ENCODE measurements at regions of chr3 and their contacts with region 1.

Region 1: GRCh38 chr3:116140100-116140689 is 305.1 kb downstream of the LSAMP start:
- DNase-seq: no peak
- H3K4me3 Mint-ChIP-seq: no peak overlapping the region
- H3K27ac Mint-ChIP-seq: no peak overlapping the region
- H3K4me1 Mint-ChIP-seq: no peaks in the 10 kb centered on the region
- H3K27me3 Mint-ChIP-seq: no peaks in the 10 kb centered on the region
- CTCF ChIP-seq: peak; percentile 83

Region 2: GRCh38 chr3:114551770-114552526 is 1588.2 kb before region 1 on chr3:
- CTCF ChIA-PET with region 1: no interaction called
- intact Hi-C with region 1: no loop called
- DNase-seq: peak; percentile 58
- H3K4me3 Mint-ChIP-seq: no peak overlapping the region
- H3K27ac Mint-ChIP-seq: peak overlapping the region; percentile 80
- H3K4me1 Mint-ChIP-seq: peaks cover 26% of the 10 kb centered on the region
- H3K27me3 Mint-ChIP-seq: no peaks in the 10 kb centered on the region
- CTCF ChIP-seq: no peak

Region 3: GRCh38 chr3:115671761-115672455 is 468.3 kb before region 1 on chr3:
- CTCF ChIA-PET with region 1: no interaction called
- intact Hi-C with region 1: no loop called
- DNase-seq: no peak
- H3K4me3 Mint-ChIP-seq: no peak overlapping the region
- H3K27ac Mint-ChIP-seq: no peak overlapping the region
- H3K4me1 Mint-ChIP-seq: no peaks in the 10 kb centered on the region
- H3K27me3 Mint-ChIP-seq: peaks cover 12% of the 10 kb centered on the region
- CTCF ChIP-seq: no peak

Region 4: GRCh38 chr3:116339441-116340028 is 199.3 kb after region 1 on chr3:
- CTCF ChIA-PET with region 1: no interaction called
- intact Hi-C with region 1: loop called (anchors 5 kb)
- DNase-seq: no peak
- H3K4me3 Mint-ChIP-seq: no peak overlapping the region
- H3K27ac Mint-ChIP-seq: no peak overlapping the region
- H3K4me1 Mint-ChIP-seq: peaks cover 18% of the 10 kb centered on the region
- H3K27me3 Mint-ChIP-seq: no peaks in the 10 kb centered on the region
- CTCF ChIP-seq: no peak

Region 5: GRCh38 chr3:116453666-116454346 is 313.6 kb after region 1 on chr3:
- CTCF ChIA-PET with region 1: interaction called, 3 read pairs
- intact Hi-C with region 1: loop called (anchors 1 kb)
- DNase-seq: no peak
- H3K4me3 Mint-ChIP-seq: no peak overlapping the region
- H3K27ac Mint-ChIP-seq: no peak overlapping the region
- H3K4me1 Mint-ChIP-seq: peaks cover 7% of the 10 kb centered on the region
- H3K27me3 Mint-ChIP-seq: no peaks in the 10 kb centered on the region
- CTCF ChIP-seq: peak; percentile 16

Region 6: DNA sequence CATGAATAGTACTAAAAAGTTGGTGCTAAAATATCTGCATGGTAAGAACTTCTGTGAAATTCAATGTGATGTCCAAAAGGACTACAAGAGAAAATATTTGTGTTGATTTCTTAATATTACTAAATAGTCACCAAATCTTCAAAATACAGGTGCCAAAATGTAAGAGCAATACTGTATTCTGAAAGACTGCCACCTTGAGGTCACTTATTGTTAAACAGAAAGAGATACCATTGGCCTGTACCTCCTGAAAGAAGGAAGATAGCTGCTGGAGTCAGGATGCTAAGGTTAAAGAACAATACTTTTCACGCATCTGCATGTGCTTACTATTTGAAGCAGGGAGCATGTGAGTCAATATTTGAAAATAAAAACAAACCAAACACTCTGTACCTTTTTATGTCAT is 377.1 kb after region 1 on chr3:
- CTCF ChIA-PET with region 1: no interaction called
- intact Hi-C with region 1: loop called (anchors 1 kb)
- DNase-seq: peak; percentile 3
- H3K4me3 Mint-ChIP-seq: no peak overlapping the region
- H3K27ac Mint-ChIP-seq: no peak overlapping the region
- H3K4me1 Mint-ChIP-seq: no peaks in the 10 kb centered on the region
- H3K27me3 Mint-ChIP-seq: no peaks in the 10 kb centered on the region
- CTCF ChIP-seq: no peak

Region 7: GRCh38 chr3:116757315-116757714 is 617.1 kb after region 1 on chr3:
- CTCF ChIA-PET with region 1: no interaction called
- intact Hi-C with region 1: loop called (anchors 2 kb)
- DNase-seq: no peak
- H3K4me3 Mint-ChIP-seq: no peak overlapping the region
- H3K27ac Mint-ChIP-seq: no peak overlapping the region
- H3K4me1 Mint-ChIP-seq: no peaks in the 10 kb centered on the region
- H3K27me3 Mint-ChIP-seq: peaks cover 39% of the 10 kb centered on the region
- CTCF ChIP-seq: no peak

Region 8: DNA sequence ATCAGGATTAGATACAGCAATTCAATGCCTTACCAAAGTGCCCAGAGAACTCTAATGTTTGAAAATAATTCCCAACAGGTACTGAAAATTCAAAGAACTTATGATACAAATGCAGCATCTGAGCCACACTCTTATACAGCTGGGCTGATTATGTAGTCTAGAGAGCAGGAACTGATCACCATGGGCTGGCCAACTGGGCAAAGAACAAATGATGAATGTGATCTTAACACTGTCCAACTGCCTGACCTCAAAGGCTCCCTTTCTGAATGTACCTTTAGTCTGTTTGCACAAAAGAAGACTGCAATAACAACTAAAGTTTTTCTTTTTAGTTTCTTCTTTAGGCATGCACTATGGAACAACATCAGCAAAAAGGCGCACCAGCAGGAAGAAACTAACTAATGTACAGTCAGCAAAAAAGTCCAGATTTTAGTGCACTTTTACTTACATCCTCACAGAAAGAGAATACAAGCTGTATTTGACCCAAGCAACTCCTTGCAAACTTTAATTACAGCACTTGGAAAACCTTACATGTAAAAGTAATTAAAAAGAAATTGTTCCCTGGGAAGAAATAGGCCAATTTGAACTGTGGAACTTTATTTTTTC is 1799.3 kb after region 1 on chr3:
- CTCF ChIA-PET with region 1: no interaction called
- intact Hi-C with region 1: loop called (anchors 10 kb)
- DNase-seq: no peak
- H3K4me3 Mint-ChIP-seq: no peak overlapping the region
- H3K27ac Mint-ChIP-seq: no peak overlapping the region
- H3K4me1 Mint-ChIP-seq: no peaks in the 10 kb centered on the region
- H3K27me3 Mint-ChIP-seq: no peaks in the 10 kb centered on the region
- CTCF ChIP-seq: no peak